GM12878 (cell line): ENCODE measurements at regions of chr2 and their contacts with region 1.

Region 1: GRCh38 chr2:165203689-165204559 is at the start of gene SCN3A:
- DNase-seq: no peak
- ATAC-seq: peak; percentile 43
- H3K4me3 ChIP-seq: no peak within 1 kb of the TSS
- H3K27ac ChIP-seq: no peak within 1 kb of the TSS
- H3K4me1 ChIP-seq: no peaks in the 10 kb centered on the region
- H3K27me3 ChIP-seq: no peaks in the 10 kb centered on the region; a peak in 1 of 4 replicates
- CTCF ChIP-seq: peak; percentile 56 to 66 (median 65); a peak in 5 of 6 replicates
- EP300 ChIP-seq: no peak
- POLR2A ChIP-seq: no peak
- RAD21 ChIP-seq: peak; percentile 83
- polyA plus RNA-seq, gene SCN3A: 0.09 TPM in 1 of 2 experiments, not detected in the other

Region 2: GRCh38 chr2:164717000-164717803 is 486.7 kb before region 1 on chr2:
- CTCF ChIA-PET with region 1: no interaction called
- POLR2A ChIA-PET with region 1: no interaction called
- RAD21 ChIA-PET with region 1: no interaction called
- SMC1A ChIA-PET with region 1: no interaction called
- in situ Hi-C with region 1: no loop called
- intact Hi-C with region 1: no loop called
- DNase-seq: no peak
- ATAC-seq: no peak
- H3K4me3 ChIP-seq: no peak overlapping the region
- H3K27ac ChIP-seq: no peak overlapping the region
- H3K4me1 ChIP-seq: no peaks in the 10 kb centered on the region
- H3K27me3 ChIP-seq: no peaks in the 10 kb centered on the region; a peak in 1 of 4 replicates
- CTCF ChIP-seq: peak; percentile 19 to 45 (median 44); a peak in 3 of 6 replicates
- EP300 ChIP-seq: no peak
- POLR2A ChIP-seq: no peak
- RAD21 ChIP-seq: peak; percentile 25; the same call in 1 of the 2 replicates

Region 3: GRCh38 chr2:164992818-164993217 is 211.1 kb before region 1 on chr2:
- CTCF ChIA-PET with region 1: interaction called, 30 read pairs
- POLR2A ChIA-PET with region 1: no interaction called
- RAD21 ChIA-PET with region 1: interaction called, 4 read pairs
- SMC1A ChIA-PET with region 1: interaction called, 4 read pairs
- in situ Hi-C with region 1: no loop called
- intact Hi-C with region 1: loop called (anchors 2 kb)
- DNase-seq: no peak
- ATAC-seq: peak; percentile 87
- H3K4me3 ChIP-seq: no peak overlapping the region
- H3K27ac ChIP-seq: no peak overlapping the region
- H3K4me1 ChIP-seq: no peaks in the 10 kb centered on the region
- H3K27me3 ChIP-seq: no peaks in the 10 kb centered on the region
- CTCF ChIP-seq: peak; percentile 40 to 44 (median 43); a peak in 5 of 6 replicates
- EP300 ChIP-seq: no peak
- POLR2A ChIP-seq: no peak
- RAD21 ChIP-seq: peak; percentile 61

Region 4: GRCh38 chr2:165141601-165142354 is 62.1 kb before region 1 on chr2:
- CTCF ChIA-PET with region 1: interaction called, 19 read pairs
- POLR2A ChIA-PET with region 1: no interaction called
- RAD21 ChIA-PET with region 1: interaction called, 5 read pairs
- SMC1A ChIA-PET with region 1: interaction called, 10 read pairs
- in situ Hi-C with region 1: no loop called
- intact Hi-C with region 1: loop called (anchors 2 kb)
- DNase-seq: no peak
- ATAC-seq: no peak
- H3K4me3 ChIP-seq: no peak overlapping the region
- H3K27ac ChIP-seq: no peak overlapping the region
- H3K4me1 ChIP-seq: no peaks in the 10 kb centered on the region
- H3K27me3 ChIP-seq: no peaks in the 10 kb centered on the region
- CTCF ChIP-seq: peak in 1 of 3 experiments; percentile 19; a peak in 2 of 6 replicates
- EP300 ChIP-seq: no peak
- POLR2A ChIP-seq: no peak
- RAD21 ChIP-seq: 0 out of 2 replicates have a peak, but pooled peaks have one; percentile 10

Region 5: DNA sequence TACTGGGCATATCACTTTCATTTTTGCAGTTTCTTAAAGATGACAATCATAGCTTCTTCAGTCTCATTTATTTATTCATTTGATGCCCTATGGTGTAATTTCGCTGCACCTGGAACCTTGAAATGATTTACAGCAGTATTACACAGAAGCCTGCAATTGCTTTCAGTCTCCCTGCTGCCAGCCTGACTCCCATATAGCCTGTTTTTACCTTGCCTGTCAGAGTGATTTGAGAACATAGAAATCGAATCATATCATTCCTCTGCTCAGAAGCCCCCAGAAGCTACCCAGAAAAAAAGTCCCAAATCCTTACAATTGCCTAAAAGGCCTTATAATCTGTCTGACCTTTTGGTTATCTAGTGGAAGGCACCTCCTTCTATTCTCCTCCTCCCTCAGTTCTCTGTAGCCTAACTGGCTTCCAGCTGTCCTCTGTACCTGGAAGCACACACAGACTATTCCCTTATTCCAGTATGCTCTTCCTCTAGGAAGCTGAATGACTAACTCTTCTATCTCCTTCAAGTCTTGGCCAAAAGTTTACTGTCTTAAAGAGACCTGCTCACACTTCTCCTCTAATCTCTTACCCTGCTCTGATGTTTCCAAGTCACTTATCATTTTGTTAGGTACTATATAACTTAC is 12.7 kb before region 1 on chr2:
- CTCF ChIA-PET with region 1: interaction called, 13 read pairs
- POLR2A ChIA-PET with region 1: no interaction called
- RAD21 ChIA-PET with region 1: interaction called, 4 read pairs
- SMC1A ChIA-PET with region 1: interaction called, 6 read pairs
- in situ Hi-C with region 1: no loop called
- intact Hi-C with region 1: no loop called
- DNase-seq: no peak
- ATAC-seq: no peak
- H3K4me3 ChIP-seq: no peak overlapping the region
- H3K27ac ChIP-seq: no peak overlapping the region
- H3K4me1 ChIP-seq: peaks cover 6% of the 10 kb centered on the region; the same call in 1 of the 2 replicates
- H3K27me3 ChIP-seq: no peaks in the 10 kb centered on the region
- CTCF ChIP-seq: no peak
- EP300 ChIP-seq: no peak
- POLR2A ChIP-seq: no peak
- RAD21 ChIP-seq: no peak

Region 6: GRCh38 chr2:165219481-165219880 is 15.6 kb after region 1 on chr2:
- CTCF ChIA-PET with region 1: interaction called, 25 read pairs
- POLR2A ChIA-PET with region 1: no interaction called
- RAD21 ChIA-PET with region 1: interaction called, 3 read pairs
- SMC1A ChIA-PET with region 1: interaction called, 3 read pairs
- in situ Hi-C with region 1: no loop called
- intact Hi-C with region 1: no loop called
- DNase-seq: no peak
- ATAC-seq: no peak
- H3K4me3 ChIP-seq: no peak overlapping the region
- H3K27ac ChIP-seq: no peak overlapping the region
- H3K4me1 ChIP-seq: no peaks in the 10 kb centered on the region
- H3K27me3 ChIP-seq: no peaks in the 10 kb centered on the region
- CTCF ChIP-seq: no peak
- EP300 ChIP-seq: no peak
- POLR2A ChIP-seq: no peak
- RAD21 ChIP-seq: no peak